Mammary epithelial cell (primary cell): ENCODE measurements at regions of chr13 and their contacts with region 1.

Region 1: GRCh38 chr13:95536632-95537241 is 15.8 kb upstream of the CLDN10 start:
- DNase-seq: peak; percentile 12
- H3K4me3 ChIP-seq: no peak overlapping the region
- H3K27ac ChIP-seq: no peak overlapping the region
- H3K4me1 ChIP-seq: peaks cover 18% of the 10 kb centered on the region
- H3K27me3 ChIP-seq: no peaks in the 10 kb centered on the region
- CTCF ChIP-seq: peak; percentile 41 to 47

Region 2: DNA sequence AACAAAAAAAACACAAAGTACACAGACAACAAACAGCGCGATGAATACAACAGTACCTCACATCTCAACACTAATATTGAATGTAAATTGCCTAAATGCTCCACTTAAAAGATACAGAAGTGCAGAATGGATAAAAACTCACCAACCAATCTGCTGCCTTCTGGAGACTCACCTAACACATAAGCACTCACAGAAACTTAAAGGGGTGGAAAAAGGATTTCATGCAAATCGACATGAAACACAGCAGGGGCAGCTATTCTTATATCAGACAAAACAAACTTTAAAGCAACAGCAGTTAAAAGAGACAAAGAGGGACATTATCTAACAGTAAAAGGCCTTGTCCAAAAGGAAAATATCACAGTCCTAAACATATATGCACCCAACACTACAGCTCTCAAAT is 445.0 kb before region 1 on chr13:
- CTCF ChIA-PET with region 1: no interaction called
- dilution Hi-C with region 1: no loop called
- in situ Hi-C with region 1: no loop called
- intact Hi-C with region 1: no loop called
- DNase-seq: no peak
- H3K4me3 ChIP-seq: no peak overlapping the region
- H3K27ac ChIP-seq: no peak overlapping the region
- H3K4me1 ChIP-seq: no peaks in the 10 kb centered on the region
- H3K27me3 ChIP-seq: no peaks in the 10 kb centered on the region
- CTCF ChIP-seq: no peak

Region 3: DNA sequence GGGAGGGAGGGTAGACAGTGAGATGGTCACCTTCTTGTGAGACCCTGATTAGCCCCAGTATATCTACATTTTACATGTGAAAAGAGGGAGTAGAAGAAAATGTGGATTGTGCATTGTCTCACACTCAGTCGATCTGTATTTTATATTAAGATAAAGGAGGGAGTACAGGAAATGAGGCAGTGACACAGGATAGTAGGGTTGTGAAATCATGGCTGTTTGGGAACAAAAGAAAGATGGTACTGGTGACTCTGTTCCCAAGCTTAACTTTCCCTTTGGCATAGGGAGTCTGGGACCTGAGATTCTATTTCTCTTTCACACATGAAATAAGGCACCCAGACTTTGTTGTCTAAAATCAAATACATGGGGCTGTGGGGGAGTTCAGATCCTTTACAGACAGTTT is 430.2 kb before region 1 on chr13:
- CTCF ChIA-PET with region 1: no interaction called
- dilution Hi-C with region 1: no loop called
- in situ Hi-C with region 1: no loop called
- intact Hi-C with region 1: no loop called
- DNase-seq: no peak
- H3K4me3 ChIP-seq: no peak overlapping the region
- H3K27ac ChIP-seq: no peak overlapping the region
- H3K4me1 ChIP-seq: no peaks in the 10 kb centered on the region
- H3K27me3 ChIP-seq: no peaks in the 10 kb centered on the region
- CTCF ChIP-seq: no peak

Region 4: DNA sequence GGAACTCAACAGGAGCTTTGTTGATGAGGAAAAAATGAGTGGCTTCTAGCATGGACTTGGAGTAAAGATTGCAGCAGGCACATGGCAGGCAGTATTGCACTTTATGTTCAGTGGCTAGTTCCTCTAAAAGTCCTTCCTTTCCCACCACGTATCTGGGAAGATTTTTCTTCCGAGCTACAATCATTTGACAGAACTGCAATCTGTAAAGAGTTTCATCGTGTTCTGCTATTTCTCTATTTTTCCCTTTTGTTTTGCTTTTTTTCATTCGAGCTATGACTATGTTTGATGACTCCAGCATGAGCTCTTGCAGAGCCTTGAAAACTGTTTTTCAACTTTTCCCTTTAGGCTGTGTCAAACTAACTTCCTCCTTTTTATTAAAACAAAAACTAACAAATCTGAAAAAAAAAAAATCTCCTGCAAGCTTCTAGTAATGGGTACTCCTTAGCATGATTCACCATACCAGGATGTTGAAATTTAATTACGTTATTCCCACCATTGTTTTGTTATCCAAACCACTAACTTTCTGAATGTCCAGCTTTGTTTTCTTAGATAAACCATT is 28.1 kb after region 1 on chr13:
- CTCF ChIA-PET with region 1: no interaction called
- dilution Hi-C with region 1: no loop called
- in situ Hi-C with region 1: no loop called
- intact Hi-C with region 1: loop called (anchors 1 kb)
- DNase-seq: peak; percentile 81
- H3K4me3 ChIP-seq: no peak overlapping the region
- H3K27ac ChIP-seq: no peak overlapping the region
- H3K4me1 ChIP-seq: peaks cover 7% of the 10 kb centered on the region
- H3K27me3 ChIP-seq: no peaks in the 10 kb centered on the region
- CTCF ChIP-seq: no peak

Region 5: GRCh38 chr13:95614641-95615245 is 78.0 kb after region 1 on chr13:
- CTCF ChIA-PET with region 1: no interaction called
- dilution Hi-C with region 1: no loop called
- in situ Hi-C with region 1: no loop called
- intact Hi-C with region 1: loop called (anchors 5 kb)
- DNase-seq: peak; percentile 28
- H3K4me3 ChIP-seq: no peak overlapping the region
- H3K27ac ChIP-seq: no peak overlapping the region
- H3K4me1 ChIP-seq: no peaks in the 10 kb centered on the region
- H3K27me3 ChIP-seq: no peaks in the 10 kb centered on the region
- CTCF ChIP-seq: peak in 1 of 2 donors; percentile 29